ENCODE measurements at regions of chr15 and their contacts with region 1.

Region 1: DNA sequence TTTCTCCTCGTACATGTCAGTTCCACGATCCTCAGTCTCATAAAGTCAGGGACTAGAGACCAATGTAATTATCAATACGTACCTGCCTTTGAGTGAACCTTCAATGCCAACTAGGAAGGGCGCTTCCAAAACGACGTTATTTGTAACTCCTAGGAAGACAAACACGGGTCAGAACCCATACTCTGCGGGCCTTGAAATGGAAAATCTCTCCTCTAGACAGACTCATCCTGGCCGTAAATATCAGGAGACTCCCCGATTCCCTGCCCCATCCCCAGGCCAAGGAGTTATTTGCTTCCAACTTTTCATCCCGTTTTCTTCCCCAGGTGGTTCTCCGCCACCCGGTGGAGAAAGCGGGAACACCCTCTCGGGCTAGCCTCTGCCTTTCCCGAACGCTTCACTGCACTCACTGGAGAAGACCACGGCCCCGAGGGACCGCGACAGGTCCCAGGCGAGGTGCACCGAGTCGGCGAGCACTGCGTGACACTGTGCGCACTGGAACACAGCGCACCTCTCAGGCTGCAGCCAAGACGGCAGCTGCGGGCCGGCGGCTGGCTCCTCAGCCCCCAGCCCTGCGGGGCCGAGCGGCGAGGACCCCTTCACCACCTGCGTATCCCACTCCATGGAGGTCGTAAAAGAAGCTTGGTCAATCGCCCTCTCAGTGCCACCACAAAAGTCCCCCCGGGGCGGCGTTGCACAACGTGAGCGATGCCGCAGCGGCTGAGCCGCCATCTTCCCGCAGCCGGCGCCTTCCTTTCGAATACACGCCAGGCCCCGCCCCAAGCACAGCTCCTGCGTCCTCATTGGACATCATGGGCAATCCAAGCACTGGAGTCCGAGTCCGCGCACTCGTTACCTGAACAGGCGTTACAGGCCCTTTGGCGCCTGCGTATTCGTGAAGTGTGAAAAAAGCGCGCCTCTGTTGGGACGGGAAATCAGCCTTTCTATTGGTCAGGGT is at the start of gene OIP5:
- DNase-seq: peak; percentile 100
- H3K4me3 ChIP-seq: peak within 1 kb of the TSS; percentile 79
- H3K27ac ChIP-seq: peak within 1 kb of the TSS; percentile 90
- H3K4me1 ChIP-seq: peaks cover 23% of the 10 kb centered on the region
- CTCF ChIP-seq: peak; percentile 68
- total RNA-seq, gene OIP5: 29.4 and 42.5 TPM in 2 replicates

Region 2: GRCh38 chr15:40564591-40565332 is 767.3 kb before region 1 on chr15 and contains the start of gene CCDC32:
- CTCF ChIA-PET with region 1: no interaction called
- POLR2A ChIA-PET with region 1: interaction called, 3 read pairs
- intact Hi-C with region 1: loop called (anchors 10 kb)
- DNase-seq: peak; percentile 98
- H3K4me3 ChIP-seq: peak within 1 kb of the TSS; percentile 92
- H3K27ac ChIP-seq: peak within 1 kb of the TSS; percentile 29
- H3K4me1 ChIP-seq: peaks cover 41% of the 10 kb centered on the region
- CTCF ChIP-seq: no peak
- total RNA-seq, gene CCDC32: 10.3 and 15.1 TPM in 2 replicates

Region 3: GRCh38 chr15:40906091-40906990 is 425.8 kb before region 1 on chr15:
- CTCF ChIA-PET with region 1: no interaction called
- POLR2A ChIA-PET with region 1: no interaction called
- intact Hi-C with region 1: no loop called
- DNase-seq: peak; percentile 91
- H3K4me3 ChIP-seq: peak overlapping the region; percentile 66
- H3K27ac ChIP-seq: peak overlapping the region; percentile 72
- H3K4me1 ChIP-seq: peaks cover 69% of the 10 kb centered on the region
- CTCF ChIP-seq: peak; percentile 87

Region 4: GRCh38 chr15:40952901-40953712 is 379.0 kb before region 1 on chr15 and contains the start of gene CHAC1:
- CTCF ChIA-PET with region 1: no interaction called
- POLR2A ChIA-PET with region 1: interaction called, 6 read pairs
- intact Hi-C with region 1: loop called (anchors 5 kb)
- DNase-seq: peak; percentile 99
- H3K4me3 ChIP-seq: peak within 1 kb of the TSS; percentile 83
- H3K27ac ChIP-seq: peak within 1 kb of the TSS; percentile 69
- H3K4me1 ChIP-seq: peaks cover 26% of the 10 kb centered on the region
- CTCF ChIP-seq: peak; percentile 19; the same call in 1 of the 2 replicates
- total RNA-seq, gene CHAC1: 40.4 and 41.4 TPM in 2 replicates

Region 5: DNA sequence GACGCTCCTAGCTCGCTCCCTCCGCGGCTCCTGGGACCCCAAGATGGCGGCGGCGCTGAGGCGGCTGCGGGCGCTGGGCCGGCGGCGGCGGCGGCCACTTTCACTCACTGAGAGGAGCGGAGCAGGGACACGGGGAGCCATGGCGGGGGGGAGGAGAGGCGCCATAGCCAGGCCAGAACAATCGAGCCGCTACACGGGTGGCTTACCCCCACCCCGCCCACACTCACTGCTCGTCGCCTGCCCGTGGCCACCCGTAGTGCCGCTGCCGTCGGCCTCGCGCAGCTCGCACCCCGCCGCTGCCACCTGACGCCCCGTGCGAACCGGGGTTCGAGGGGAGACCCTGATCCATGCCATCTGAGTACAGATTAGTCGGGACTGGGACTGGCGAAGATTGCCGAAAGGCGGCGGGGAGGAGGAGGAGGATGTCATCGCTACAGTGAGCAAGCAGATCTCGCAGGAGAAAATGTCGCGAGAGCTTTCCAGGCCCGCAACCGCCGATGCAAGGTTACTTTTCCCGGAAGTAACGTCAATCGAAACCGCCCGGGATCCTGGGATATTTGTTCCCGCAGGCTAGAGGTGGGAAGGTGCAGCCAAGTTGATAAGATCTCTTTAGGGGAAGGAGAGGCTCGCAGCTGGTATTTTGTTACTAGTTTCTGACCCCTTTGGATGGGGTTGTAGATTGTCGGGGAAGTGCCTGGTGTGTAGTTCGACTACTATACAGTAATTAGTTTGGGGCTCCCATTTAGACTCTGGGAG is 215.8 kb before region 1 on chr15 and contains the start of gene INO80:
- CTCF ChIA-PET with region 1: no interaction called
- POLR2A ChIA-PET with region 1: no interaction called
- intact Hi-C with region 1: loop called (anchors 5 kb)
- DNase-seq: peak; percentile 98
- H3K4me3 ChIP-seq: peak within 1 kb of the TSS; percentile 77
- H3K27ac ChIP-seq: peak within 1 kb of the TSS; percentile 74
- H3K4me1 ChIP-seq: peaks cover 13% of the 10 kb centered on the region
- CTCF ChIP-seq: no peak
- total RNA-seq, gene INO80: 31.7 and 47.1 TPM in 2 replicates

Region 6: DNA sequence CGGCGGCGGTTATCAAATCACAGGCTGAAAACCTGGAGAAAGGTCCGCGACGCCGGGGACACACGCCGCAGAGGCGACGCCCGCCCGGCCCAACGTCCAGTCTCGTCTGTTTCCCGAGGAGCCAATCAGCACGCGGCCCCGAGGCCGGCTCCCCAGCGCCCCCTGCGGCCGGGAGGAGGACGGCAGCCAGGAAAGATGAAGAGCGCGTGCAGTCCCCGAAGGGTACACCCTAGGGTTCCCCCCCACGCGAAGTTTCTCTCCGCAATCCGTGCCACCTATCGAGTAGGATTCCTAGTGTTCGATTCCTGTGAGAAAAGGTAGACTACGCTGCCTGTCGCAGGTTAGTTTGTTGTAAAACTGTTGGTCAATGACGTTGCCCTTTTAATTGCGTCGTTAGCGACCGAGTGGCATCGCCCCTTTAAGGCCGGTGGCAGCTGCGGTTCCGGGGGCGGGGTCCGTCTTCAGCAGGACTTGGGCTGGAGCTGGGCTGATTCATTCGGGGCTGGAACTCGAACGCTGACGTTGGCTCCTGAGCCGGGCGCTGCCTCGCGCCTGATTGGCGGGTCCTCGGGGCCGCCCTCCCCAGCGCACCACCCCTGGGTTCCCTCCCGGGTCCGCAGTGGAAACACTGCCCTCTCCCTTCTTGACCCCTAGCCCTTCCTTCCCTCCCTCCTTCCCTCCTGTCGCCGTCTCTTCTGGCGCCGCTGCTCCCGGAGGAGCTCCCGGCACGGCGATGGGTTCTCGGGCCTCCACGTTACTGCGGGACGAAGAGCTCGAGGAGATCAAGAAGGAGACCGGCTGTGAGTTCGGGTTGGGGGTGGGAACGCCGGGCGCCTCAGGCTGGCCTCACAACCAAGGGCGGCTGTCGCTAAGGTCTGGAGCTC is 101.2 kb before region 1 on chr15 and contains the starts of genes CHP1 and EXD1:
- CTCF ChIA-PET with region 1: no interaction called
- POLR2A ChIA-PET with region 1: interaction called, 6 read pairs
- intact Hi-C with region 1: loop called (anchors 1 kb)
- DNase-seq: peak; percentile 96
- H3K4me3 ChIP-seq: peak within 1 kb of the TSS; percentile 86
- H3K27ac ChIP-seq: peak within 1 kb of the TSS; percentile 47
- H3K4me1 ChIP-seq: peaks cover 16% of the 10 kb centered on the region
- CTCF ChIP-seq: peak; percentile 95
- total RNA-seq, gene CHP1: 19.4 and 32.4 TPM in 2 replicates
- total RNA-seq, gene EXD1: not detected in 2 replicates

Region 7: DNA sequence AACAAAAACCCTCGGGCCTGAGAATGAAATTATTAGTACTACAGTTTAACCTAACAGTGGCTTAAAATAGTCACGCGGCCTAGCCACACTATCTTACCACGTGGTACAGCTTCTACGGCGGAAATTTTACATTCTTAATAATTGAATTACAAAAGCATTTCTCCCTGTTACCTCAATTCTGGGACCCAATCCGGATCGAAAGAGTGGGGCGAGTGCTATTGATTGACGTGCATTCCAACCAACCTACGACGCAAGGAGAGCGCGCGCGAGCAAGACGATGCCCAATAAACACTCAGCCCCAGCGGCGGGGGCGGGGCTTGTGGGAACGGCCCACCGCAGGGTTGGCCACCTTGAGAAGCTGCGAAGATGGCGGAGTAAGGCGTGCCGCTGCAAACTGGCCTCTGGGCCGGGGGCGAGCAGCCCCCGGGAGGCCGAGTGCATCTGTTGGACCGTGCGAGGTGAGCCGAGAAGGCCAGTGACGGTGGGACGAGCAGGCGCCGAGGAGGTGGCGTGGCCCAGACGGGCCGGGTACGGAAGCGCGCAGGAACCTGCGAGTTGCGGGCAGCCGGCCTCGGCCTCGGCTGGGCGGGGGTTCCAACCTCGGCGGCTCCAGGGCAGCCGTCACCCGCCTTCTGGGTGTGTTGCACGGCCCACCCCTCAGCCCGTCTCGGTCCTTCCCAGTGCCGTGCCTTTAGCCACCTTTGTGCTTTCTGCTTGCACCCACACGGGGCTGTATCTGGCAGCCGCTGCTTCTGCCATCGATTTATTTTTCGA is 48.3 kb before region 1 on chr15:
- CTCF ChIA-PET with region 1: no interaction called
- POLR2A ChIA-PET with region 1: interaction called, 5 read pairs
- intact Hi-C with region 1: loop called (anchors 1 kb)
- DNase-seq: peak; percentile 100
- H3K4me3 ChIP-seq: peak overlapping the region; percentile 98
- H3K27ac ChIP-seq: peak overlapping the region; percentile 93
- H3K4me1 ChIP-seq: peaks cover 39% of the 10 kb centered on the region
- CTCF ChIP-seq: no peak

Region 8: DNA sequence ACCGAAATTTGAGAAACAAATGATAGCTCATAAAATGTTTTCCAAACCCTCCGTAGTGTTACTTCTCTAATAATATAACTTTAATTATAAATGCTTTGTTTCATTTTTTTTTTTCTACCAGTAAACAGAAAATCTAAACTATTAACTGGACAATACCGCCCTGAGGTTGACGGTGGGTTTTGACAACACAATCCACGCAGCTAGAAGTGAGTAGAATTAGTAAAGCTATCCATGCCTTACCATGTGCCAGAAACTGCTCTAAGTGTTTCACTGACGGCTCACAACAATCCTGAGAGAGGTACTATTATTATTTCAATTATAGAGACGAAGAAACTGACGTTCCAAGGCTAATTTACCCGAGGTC is 69.8 kb after region 1 on chr15:
- CTCF ChIA-PET with region 1: interaction called, 3 read pairs
- POLR2A ChIA-PET with region 1: no interaction called
- intact Hi-C with region 1: loop called (anchors 2 kb)
- DNase-seq: no peak
- H3K4me3 ChIP-seq: peak overlapping the region; percentile 80
- H3K27ac ChIP-seq: peak overlapping the region; percentile 82
- H3K4me1 ChIP-seq: peaks cover 20% of the 10 kb centered on the region
- CTCF ChIP-seq: no peak

Measured in OCI-LY7 (cell line).